Mammary epithelial cell (primary cell): ENCODE measurements at regions of chr11 and their contacts with region 1.

Region 1: GRCh38 chr11:59753650-59754493 is 1.3 kb upstream of the STX3 start:
- DNase-seq: peak; percentile 58
- H3K4me3 ChIP-seq: peak overlapping the region; percentile 80 to 94 (median 83)
- H3K27ac ChIP-seq: peak overlapping the region; percentile 82
- H3K4me1 ChIP-seq: peaks cover 21% of the 10 kb centered on the region
- H3K27me3 ChIP-seq: no peaks in the 10 kb centered on the region
- CTCF ChIP-seq: peak; percentile 79 to 92

Region 2: DNA sequence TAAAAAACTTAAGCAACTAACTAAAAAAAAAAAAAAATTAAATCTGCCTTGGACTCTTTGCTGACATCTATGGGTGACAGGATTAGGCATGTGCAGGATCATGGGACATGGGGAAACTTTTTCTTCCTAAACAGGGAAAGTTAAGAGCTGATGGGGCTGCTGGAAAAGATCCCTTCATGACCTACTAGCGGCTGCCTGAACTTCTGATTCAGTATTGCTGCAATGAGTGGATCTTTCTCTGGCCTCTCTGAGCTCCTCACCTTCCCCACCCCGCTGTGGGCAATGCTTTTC is 352.7 kb before region 1 on chr11:
- CTCF ChIA-PET with region 1: no interaction called
- dilution Hi-C with region 1: no loop called
- in situ Hi-C with region 1: no loop called
- intact Hi-C with region 1: no loop called
- DNase-seq: no peak
- H3K4me3 ChIP-seq: no peak overlapping the region
- H3K27ac ChIP-seq: no peak overlapping the region
- H3K4me1 ChIP-seq: no peaks in the 10 kb centered on the region
- H3K27me3 ChIP-seq: no peaks in the 10 kb centered on the region
- CTCF ChIP-seq: peak in 1 of 2 donors; percentile 22

Region 3: GRCh38 chr11:59550368-59550841 is 203.5 kb before region 1 on chr11:
- CTCF ChIA-PET with region 1: no interaction called
- dilution Hi-C with region 1: no loop called
- in situ Hi-C with region 1: no loop called
- intact Hi-C with region 1: loop called (anchors 5 kb)
- DNase-seq: peak; percentile 97
- H3K4me3 ChIP-seq: peak overlapping the region; percentile 51 to 69 (median 62)
- H3K27ac ChIP-seq: peak overlapping the region; percentile 52
- H3K4me1 ChIP-seq: peaks cover 9% of the 10 kb centered on the region
- H3K27me3 ChIP-seq: no peaks in the 10 kb centered on the region
- CTCF ChIP-seq: peak; percentile 28 to 62

Region 4: GRCh38 chr11:59660621-59661020 is 93.3 kb before region 1 on chr11:
- CTCF ChIA-PET with region 1: interaction called, 19 read pairs
- dilution Hi-C with region 1: no loop called
- in situ Hi-C with region 1: no loop called
- intact Hi-C with region 1: no loop called
- DNase-seq: no peak
- H3K4me3 ChIP-seq: no peak overlapping the region
- H3K27ac ChIP-seq: no peak overlapping the region
- H3K4me1 ChIP-seq: no peaks in the 10 kb centered on the region
- H3K27me3 ChIP-seq: no peaks in the 10 kb centered on the region
- CTCF ChIP-seq: no peak

Region 5: GRCh38 chr11:59706518-59707285 is 47.2 kb before region 1 on chr11:
- CTCF ChIA-PET with region 1: no interaction called
- dilution Hi-C with region 1: no loop called
- in situ Hi-C with region 1: no loop called
- intact Hi-C with region 1: loop called (anchors 5 kb)
- DNase-seq: peak; percentile 94
- H3K4me3 ChIP-seq: no peak overlapping the region
- H3K27ac ChIP-seq: peak overlapping the region; percentile 94
- H3K4me1 ChIP-seq: peaks cover 37% of the 10 kb centered on the region
- H3K27me3 ChIP-seq: no peaks in the 10 kb centered on the region
- CTCF ChIP-seq: no peak

Region 6: GRCh38 chr11:59787816-59788215 is 33.9 kb after region 1 on chr11:
- CTCF ChIA-PET with region 1: no interaction called
- dilution Hi-C with region 1: no loop called
- in situ Hi-C with region 1: no loop called
- intact Hi-C with region 1: loop called (anchors 1 kb)
- DNase-seq: peak; percentile 72
- H3K4me3 ChIP-seq: no peak overlapping the region
- H3K27ac ChIP-seq: peak overlapping the region; percentile 5
- H3K4me1 ChIP-seq: peaks cover 28% of the 10 kb centered on the region
- H3K27me3 ChIP-seq: no peaks in the 10 kb centered on the region
- CTCF ChIP-seq: no peak

Region 7: GRCh38 chr11:59810189-59810910 is 56.5 kb after region 1 on chr11 and contains the start of gene MRPL16:
- CTCF ChIA-PET with region 1: no interaction called
- dilution Hi-C with region 1: no loop called
- in situ Hi-C with region 1: no loop called
- intact Hi-C with region 1: loop called (anchors 1 kb)
- DNase-seq: peak; percentile 92
- H3K4me3 ChIP-seq: peak within 1 kb of the TSS; percentile 73 to 94 (median 92)
- H3K27ac ChIP-seq: peak within 1 kb of the TSS; percentile 66
- H3K4me1 ChIP-seq: peaks cover 17% of the 10 kb centered on the region
- H3K27me3 ChIP-seq: no peaks in the 10 kb centered on the region
- CTCF ChIP-seq: peak; percentile 25 to 54
- total RNA-seq, gene MRPL16: 27.7 to 46.6 TPM

Region 8: GRCh38 chr11:59822989-59823566 is 69.2 kb after region 1 on chr11:
- CTCF ChIA-PET with region 1: no interaction called
- dilution Hi-C with region 1: no loop called
- in situ Hi-C with region 1: no loop called
- intact Hi-C with region 1: no loop called
- DNase-seq: peak; percentile 65
- H3K4me3 ChIP-seq: no peak overlapping the region
- H3K27ac ChIP-seq: no peak overlapping the region
- H3K4me1 ChIP-seq: no peaks in the 10 kb centered on the region
- H3K27me3 ChIP-seq: no peaks in the 10 kb centered on the region
- CTCF ChIP-seq: peak; percentile 71 to 73